ENCODE measurements at regions of chr1 and their contacts with region 1.

Region 1: DNA sequence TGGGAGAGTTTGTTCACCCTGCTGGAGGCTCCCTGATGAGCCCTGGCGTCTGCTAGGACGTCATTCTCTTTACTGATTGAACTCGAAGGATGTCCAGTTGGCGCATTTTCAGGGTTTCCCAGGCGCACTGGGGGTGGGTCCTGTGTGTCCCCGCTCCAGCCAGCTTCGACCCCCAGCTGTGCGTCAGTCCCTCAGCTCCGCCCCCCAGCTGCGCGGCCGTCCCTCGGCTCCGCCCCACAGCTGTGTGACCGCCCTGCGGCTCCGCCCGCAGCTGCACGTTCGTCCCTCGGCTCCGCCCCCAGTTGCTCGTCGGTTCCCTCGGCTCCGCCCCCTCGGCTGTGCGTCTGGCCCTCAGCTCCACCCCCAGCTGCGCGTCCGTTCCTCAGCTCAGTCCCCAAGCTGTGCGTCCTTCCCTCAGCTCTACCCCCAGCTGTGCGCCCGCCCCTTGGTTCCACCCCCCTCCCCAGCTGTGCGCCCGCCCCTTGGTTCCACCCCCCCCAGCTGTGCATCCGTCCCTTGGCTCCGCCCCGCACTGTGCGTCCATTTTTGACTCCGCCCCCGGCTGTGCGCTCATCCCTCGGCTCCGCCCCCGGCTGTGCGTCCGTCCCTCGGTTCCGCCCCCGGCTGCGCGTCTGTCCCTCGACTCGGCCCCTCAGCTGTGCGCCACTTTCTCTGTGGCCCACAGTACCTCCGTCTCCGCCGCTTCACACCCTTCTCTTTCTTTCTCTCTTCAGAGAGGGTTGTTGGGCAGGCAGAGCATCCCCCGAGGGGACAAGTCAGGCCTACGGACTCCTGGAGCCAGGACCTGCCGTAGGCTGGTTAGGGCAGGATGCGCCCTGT is 61.3 kb downstream of the FAAP20 start:
- DNase-seq: peak; percentile 97
- H3K4me3 Mint-ChIP-seq: peak overlapping the region; percentile 76
- H3K27ac Mint-ChIP-seq: no peak overlapping the region
- H3K4me1 Mint-ChIP-seq: peaks cover 12% of the 10 kb centered on the region
- H3K27me3 Mint-ChIP-seq: no peaks in the 10 kb centered on the region

Region 2: DNA sequence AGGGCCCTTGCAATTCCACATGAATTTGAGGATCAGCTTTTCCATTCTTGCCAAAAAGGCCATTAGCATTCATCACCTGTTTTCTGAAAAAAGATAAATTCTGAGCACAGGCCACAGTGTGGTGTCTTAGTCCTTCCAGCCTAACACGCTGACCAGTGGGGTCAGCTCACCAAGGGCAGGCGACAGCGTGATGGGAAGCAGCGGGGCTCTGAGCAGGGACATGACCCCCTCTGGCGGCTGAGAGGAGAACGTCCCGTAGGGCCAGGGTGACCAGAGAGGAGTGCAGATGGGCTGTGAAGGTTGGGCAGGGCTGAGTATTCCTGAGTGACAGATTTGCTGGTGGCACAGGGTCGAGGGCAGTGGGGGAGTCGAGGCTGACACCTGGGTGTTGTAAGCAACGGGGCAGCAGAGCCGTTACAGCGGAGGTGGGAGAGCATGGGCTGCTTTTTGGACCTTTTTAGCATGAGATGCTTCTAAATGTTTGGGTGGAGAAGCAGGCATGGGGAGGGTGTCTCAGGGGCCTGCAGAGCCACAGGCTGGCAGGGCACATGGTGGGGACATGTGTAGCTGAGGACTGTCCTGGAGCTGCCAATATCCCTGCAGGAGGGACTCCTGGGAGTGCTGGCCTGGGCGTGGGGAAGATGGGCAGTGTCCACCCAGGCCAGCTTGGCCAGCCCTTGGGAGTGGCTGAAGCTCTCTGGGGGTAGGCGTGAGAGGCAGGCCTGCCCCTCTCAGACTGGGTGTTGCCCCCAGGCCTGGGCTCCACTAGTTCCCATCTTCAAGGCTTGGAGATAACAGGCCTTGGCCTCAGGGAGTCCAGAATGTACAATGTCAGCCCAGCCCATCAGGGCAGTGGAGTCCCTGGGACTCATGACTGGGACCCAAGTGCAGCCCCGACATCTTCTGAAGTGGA is 226.8 kb before region 1 on chr1:
- CTCF ChIA-PET with region 1: no interaction called
- intact Hi-C with region 1: loop called (anchors 1 kb)
- DNase-seq: peak; percentile 81
- H3K4me3 Mint-ChIP-seq: peak overlapping the region; percentile 5
- H3K27ac Mint-ChIP-seq: peak overlapping the region; percentile 11
- H3K4me1 Mint-ChIP-seq: peaks cover 16% of the 10 kb centered on the region
- H3K27me3 Mint-ChIP-seq: no peaks in the 10 kb centered on the region

Region 3: GRCh38 chr1:1919304-1920056 is 213.8 kb before region 1 on chr1:
- CTCF ChIA-PET with region 1: no interaction called
- intact Hi-C with region 1: loop called (anchors 1 kb)
- DNase-seq: peak; percentile 99
- H3K4me3 Mint-ChIP-seq: peak overlapping the region; percentile 67
- H3K27ac Mint-ChIP-seq: no peak overlapping the region
- H3K4me1 Mint-ChIP-seq: peaks cover 4% of the 10 kb centered on the region
- H3K27me3 Mint-ChIP-seq: no peaks in the 10 kb centered on the region

Region 4: DNA sequence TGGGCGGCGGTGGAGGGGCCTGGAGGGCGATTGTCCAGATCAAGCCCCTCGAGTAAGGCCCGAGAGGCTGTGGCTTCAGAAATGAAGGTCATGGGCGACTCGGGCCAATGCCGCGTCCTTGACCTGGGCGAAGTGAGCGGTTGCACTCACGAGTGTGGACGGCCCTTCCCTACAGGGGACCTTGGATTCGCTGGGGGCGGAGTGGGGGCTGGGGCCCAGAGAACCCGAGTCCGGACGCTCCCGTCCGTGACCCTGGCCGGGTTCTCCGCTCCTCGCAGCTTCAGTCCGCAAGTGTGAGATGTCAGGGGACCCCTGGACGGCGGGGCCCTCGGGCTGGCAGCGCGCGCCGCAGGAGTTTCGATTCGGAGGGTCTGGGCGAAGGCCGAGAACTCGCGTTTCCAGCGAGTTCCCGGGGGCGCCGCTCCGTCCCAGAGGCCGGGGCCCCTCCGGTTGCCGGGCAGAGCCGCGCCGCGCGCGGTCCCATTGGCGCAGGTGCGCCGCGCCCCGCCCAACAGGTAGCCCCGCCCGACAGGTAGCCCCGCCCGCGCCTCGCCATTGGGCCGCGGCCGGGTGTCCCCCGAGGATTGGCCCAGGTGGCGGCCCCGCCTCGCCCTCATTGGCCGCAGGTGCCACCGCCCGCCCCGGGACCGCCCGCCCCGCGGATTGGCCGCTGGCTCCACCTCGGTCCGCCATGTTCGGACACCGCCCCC is 83.4 kb before region 1 on chr1 and contains the start of gene PRKCZ:
- CTCF ChIA-PET with region 1: interaction called, 3 read pairs
- intact Hi-C with region 1: loop called (anchors 5 kb)
- DNase-seq: peak; percentile 93
- H3K4me3 Mint-ChIP-seq: peak within 1 kb of the TSS; percentile 73
- H3K27ac Mint-ChIP-seq: no peak within 1 kb of the TSS
- H3K4me1 Mint-ChIP-seq: peaks cover 17% of the 10 kb centered on the region
- H3K27me3 Mint-ChIP-seq: peaks cover 12% of the 10 kb centered on the region
- total RNA-seq, gene PRKCZ: 6.8 to 7.0 TPM

Region 5: DNA sequence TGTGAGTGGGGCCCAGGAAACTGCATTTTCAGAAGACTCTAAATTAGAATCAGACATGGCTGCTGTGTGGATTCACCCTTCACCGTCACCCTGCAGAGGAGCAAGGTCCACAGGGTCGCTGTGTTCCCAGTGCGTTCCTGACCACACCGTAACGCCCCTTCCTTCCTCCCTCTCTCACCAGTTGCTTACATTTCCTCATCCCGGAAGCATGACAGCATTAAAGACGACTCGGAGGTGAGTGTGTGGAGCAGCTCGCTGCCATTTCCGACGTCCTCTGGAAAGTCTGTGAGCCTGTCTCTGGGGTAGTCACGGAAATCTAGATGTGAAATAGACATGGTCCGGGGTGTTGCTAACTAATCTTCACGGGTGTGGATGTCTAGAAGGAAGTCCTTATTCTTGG is 15.4 kb after region 1 on chr1:
- CTCF ChIA-PET with region 1: no interaction called
- intact Hi-C with region 1: loop called (anchors 2 kb)
- DNase-seq: peak; percentile 79
- H3K4me3 Mint-ChIP-seq: no peak overlapping the region
- H3K27ac Mint-ChIP-seq: no peak overlapping the region
- H3K4me1 Mint-ChIP-seq: peaks cover 12% of the 10 kb centered on the region
- H3K27me3 Mint-ChIP-seq: no peaks in the 10 kb centered on the region

Region 6: DNA sequence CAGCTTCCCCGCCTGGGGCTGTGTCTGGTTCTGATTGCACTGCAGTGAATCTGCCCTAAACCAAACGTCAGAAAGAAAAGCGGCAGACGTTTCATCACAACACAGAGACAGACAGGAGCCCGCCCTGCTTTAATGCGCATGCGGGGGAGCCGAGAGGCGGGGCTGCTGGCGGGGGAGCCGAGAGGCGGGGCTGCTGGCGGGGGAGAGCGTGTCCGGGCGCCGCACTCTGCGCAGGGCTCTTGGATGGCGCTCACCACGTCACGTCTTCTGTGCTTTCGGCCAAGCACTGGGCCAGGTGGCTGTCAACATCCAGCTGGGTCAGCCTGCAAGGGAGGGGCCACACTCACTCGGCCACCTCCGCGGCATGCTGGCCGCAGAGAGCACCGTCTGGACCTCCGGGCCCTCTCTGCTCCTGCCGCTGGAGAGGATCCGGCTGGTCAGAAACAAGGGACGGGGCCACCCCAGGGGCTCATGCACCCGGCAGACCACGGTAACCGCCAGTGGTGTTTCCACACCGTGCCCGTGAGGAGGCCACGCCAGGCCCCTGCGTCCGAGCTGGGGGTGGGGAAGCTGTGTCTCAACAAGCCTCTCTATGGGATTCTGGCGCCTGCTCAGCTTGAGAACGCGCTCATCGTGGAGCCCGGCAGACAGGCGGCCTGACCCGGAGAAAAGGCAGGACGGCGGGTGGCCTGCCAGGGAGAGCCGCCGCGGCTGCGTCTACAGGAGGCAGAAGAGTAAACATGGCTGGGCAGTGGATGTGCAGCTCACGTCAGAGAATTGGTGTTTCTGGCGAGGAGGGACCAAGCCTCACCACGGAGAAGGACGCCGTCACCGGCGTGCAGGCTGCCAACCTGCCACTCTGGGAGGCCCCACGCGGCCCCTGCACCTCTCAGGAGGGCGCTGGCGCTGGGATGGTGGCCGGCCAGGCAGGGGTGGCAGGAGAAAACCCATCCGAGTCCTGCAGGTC is 56.5 kb after region 1 on chr1:
- CTCF ChIA-PET with region 1: interaction called, 3 read pairs
- intact Hi-C with region 1: loop called (anchors 1 kb)
- DNase-seq: peak; percentile 95
- H3K4me3 Mint-ChIP-seq: peak overlapping the region; percentile 74
- H3K27ac Mint-ChIP-seq: peak overlapping the region; percentile 91
- H3K4me1 Mint-ChIP-seq: peaks cover 25% of the 10 kb centered on the region
- H3K27me3 Mint-ChIP-seq: no peaks in the 10 kb centered on the region

Region 7: DNA sequence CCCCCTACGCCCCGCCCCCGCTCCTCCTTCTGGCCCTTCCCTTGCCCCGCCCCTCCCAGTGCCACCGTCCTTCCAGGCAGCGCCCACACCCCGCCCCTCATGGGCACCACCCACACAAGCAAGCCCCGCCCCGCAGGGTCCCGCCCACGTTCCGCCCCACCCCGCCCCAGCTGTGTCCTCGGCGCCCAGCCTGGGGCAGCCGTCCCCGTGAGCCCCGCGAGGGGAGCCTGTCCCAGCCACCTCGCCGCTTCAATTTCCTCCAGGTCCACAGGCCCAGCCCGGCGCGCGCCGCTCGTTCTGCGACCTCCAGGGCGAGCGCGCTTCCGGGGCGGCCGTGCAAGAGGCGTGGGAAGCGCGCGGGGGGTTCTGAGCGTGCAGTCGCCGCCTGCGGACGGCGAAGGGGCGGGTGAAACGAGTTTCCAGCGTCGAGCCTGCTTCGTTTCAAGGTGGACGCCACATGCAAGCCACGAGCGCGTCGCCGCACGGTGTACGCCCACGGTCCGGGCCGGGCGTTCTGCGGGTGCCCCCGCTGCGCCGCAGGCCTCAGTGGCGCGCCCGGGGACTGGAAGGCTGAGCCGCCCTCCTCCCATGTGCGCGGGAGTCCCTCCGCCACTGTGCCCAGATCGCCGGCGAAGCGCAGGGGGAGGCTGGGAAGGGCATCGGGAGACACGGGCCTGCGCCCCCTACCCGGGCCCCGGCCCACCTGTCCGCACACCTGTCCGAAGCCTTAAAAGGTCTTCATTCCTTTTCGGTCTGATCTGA is 72.1 kb after region 1 on chr1:
- CTCF ChIA-PET with region 1: no interaction called
- intact Hi-C with region 1: loop called (anchors 2 kb)
- DNase-seq: peak; percentile 96
- H3K4me3 Mint-ChIP-seq: peak overlapping the region; percentile 52
- H3K27ac Mint-ChIP-seq: no peak overlapping the region
- H3K4me1 Mint-ChIP-seq: no peaks in the 10 kb centered on the region
- H3K27me3 Mint-ChIP-seq: no peaks in the 10 kb centered on the region

Measured in activated naive CD4-positive, alpha-beta T cell treated with anti-CD3 and anti-CD28 coated beads for 36 hours (primary cell).